ENCODE measurements at regions of chr1 and their contacts with region 1.

Region 1: DNA sequence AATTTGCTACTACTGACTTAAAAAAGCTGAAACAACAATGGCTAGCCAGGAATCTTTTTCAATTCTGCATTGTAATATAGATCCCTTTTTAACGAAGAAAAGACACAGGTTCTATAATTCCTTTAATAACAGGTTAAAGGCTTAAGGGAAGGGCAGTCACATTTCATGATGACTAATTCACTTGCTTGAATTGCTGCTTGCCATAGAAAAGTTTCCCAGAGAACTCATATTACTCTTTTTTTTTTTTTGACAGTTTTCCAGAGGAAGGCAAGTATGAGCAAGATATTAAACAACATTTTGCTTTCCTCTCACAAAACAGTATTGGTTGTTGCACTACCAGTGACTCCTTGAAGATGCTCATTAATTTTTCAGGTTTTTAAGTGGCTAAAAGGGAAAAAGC is 60.9 kb downstream of the IL23R start:
- DNase-seq: no peak
- ATAC-seq: no peak
- H3K4me3 Mint-ChIP-seq: no peak overlapping the region
- H3K27ac Mint-ChIP-seq: no peak overlapping the region
- H3K4me1 Mint-ChIP-seq: no peaks in the 10 kb centered on the region
- H3K27me3 Mint-ChIP-seq: peaks cover 4% of the 10 kb centered on the region
- CTCF ChIP-seq: no peak

Region 2: DNA sequence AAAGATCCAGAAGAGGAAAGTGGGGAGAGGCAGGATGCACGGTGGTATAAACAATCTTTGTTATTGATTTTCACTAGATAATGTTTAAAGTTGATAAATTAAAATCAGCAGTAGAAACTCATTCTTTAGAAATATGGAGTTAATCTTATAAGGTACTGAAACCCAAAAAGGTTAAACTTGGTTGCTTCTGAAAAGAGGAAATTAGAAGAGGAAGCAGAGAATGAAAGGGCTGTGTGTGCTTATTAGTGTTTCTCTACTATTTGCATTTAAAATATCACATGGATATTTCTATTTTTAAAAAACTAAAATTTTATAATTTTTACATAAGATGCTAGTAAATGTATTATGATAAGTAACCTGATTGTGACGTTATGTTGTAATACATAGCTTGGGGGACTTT is 116.8 kb before region 1 on chr1:
- CTCF ChIA-PET with region 1: no interaction called
- POLR2A ChIA-PET with region 1: no interaction called
- intact Hi-C with region 1: no loop called
- DNase-seq: no peak
- ATAC-seq: peak; percentile 60
- H3K4me3 Mint-ChIP-seq: peak overlapping the region; percentile 58
- H3K27ac Mint-ChIP-seq: peak overlapping the region; percentile 76
- H3K4me1 Mint-ChIP-seq: peaks cover 41% of the 10 kb centered on the region
- H3K27me3 Mint-ChIP-seq: no peaks in the 10 kb centered on the region
- CTCF ChIP-seq: no peak

Region 3: DNA sequence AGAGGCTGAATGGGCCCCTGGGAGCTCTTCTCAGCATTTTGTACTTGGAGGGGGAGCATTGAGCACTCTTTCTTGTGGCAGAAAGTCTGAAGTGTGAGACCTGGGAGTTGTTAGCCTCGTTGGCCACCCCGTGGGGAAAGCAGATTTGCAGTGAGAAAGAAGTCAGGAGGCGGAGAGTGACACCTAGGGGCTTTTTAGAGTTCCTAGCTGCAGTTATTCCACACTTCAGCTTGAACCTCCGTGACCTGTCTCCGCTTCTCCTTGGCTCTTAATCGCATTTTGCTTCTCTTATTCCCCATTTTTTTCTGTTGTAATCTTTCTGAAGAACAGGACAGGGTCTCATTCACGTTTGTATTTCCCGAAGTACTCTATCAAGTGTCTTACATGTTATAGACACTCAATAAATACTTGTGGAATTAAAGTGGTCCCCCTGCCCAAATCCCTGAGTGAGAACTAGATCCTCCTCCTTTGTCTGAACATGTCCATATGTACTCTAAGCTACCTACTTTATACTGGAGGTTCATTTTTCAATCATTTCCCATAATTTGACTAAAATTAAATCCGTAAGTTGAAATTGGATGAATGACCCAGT is 77.9 kb before region 1 on chr1:
- CTCF ChIA-PET with region 1: no interaction called
- POLR2A ChIA-PET with region 1: no interaction called
- intact Hi-C with region 1: no loop called
- DNase-seq: peak; percentile 23
- ATAC-seq: peak; percentile 87
- H3K4me3 Mint-ChIP-seq: no peak overlapping the region
- H3K27ac Mint-ChIP-seq: no peak overlapping the region
- H3K4me1 Mint-ChIP-seq: peaks cover 9% of the 10 kb centered on the region
- H3K27me3 Mint-ChIP-seq: peaks cover 8% of the 10 kb centered on the region
- CTCF ChIP-seq: no peak

Region 4: DNA sequence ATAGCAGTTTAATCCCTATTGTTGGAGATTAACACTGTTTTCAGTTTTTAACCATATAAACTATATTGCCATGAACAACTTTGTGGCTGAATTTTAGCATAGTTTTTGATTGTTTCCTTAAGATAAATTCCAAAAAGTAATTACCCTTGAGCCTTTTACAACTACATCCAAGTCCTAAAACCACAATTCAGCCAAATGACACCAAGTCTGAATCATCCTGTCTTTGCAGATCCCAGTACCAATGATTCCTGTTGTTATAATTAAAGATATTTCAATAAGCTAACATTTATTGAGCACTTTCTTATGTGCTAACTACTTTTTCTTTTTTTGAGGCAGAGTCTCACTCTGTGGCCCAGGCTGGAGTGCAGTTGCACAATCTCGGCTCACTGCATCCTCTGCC is 25.3 kb before region 1 on chr1:
- CTCF ChIA-PET with region 1: no interaction called
- POLR2A ChIA-PET with region 1: no interaction called
- intact Hi-C with region 1: no loop called
- DNase-seq: no peak
- ATAC-seq: no peak
- H3K4me3 Mint-ChIP-seq: no peak overlapping the region
- H3K27ac Mint-ChIP-seq: no peak overlapping the region
- H3K4me1 Mint-ChIP-seq: no peaks in the 10 kb centered on the region
- H3K27me3 Mint-ChIP-seq: peaks cover 6% of the 10 kb centered on the region
- CTCF ChIP-seq: no peak

Region 5: GRCh38 chr1:67285780-67286488 is 58.7 kb after region 1 on chr1:
- CTCF ChIA-PET with region 1: no interaction called
- POLR2A ChIA-PET with region 1: no interaction called
- intact Hi-C with region 1: loop called (anchors 2 kb)
- DNase-seq: no peak
- ATAC-seq: peak; percentile 49
- H3K4me3 Mint-ChIP-seq: no peak overlapping the region
- H3K27ac Mint-ChIP-seq: no peak overlapping the region
- H3K4me1 Mint-ChIP-seq: peaks cover 11% of the 10 kb centered on the region
- H3K27me3 Mint-ChIP-seq: peaks cover 4% of the 10 kb centered on the region
- CTCF ChIP-seq: no peak

Measured in activated B cell treated with CpG ODN at 0.5 μM for 24 hours (primary cell).